AG04450 (cell line): ENCODE measurements at regions of chr16 and their contacts with region 1.

Region 1: DNA sequence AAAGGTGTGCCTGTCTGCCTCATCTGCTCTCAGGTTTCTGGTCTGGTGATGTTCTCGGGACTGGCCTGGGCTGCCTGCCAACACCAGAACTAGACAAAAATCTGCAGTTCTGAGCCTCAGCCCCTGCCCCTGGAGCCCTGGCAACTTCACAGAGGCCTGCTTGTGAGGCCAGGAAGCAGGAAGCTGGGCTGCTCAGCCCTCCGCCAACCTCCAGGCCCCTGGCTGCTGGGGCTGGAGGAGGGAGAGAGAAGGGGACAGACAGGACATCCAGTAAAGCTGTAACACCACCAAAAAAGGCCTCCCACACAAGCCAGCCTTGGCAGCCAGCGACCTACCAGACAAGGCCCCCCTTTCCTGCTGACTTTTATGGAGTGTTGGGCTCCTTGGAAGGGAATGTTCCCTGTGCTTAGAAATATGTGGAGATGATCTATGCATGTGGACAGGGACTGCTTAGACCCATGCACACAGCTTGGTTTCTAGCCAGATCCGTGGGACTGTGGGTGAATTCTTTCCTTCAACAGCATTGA is 157.6 kb downstream of the XYLT1 start:
- DNase-seq: no peak
- H3K4me3 ChIP-seq: no peak overlapping the region
- H3K27ac ChIP-seq: peak overlapping the region; percentile 39
- H3K27me3 ChIP-seq: no peaks in the 10 kb centered on the region
- CTCF ChIP-seq: no peak

Region 2: GRCh38 chr16:17296431-17296830 is 16.7 kb before region 1 on chr16:
- CTCF ChIA-PET with region 1: interaction called, 15 read pairs
- POLR2A ChIA-PET with region 1: no interaction called
- DNase-seq: no peak
- H3K4me3 ChIP-seq: no peak overlapping the region
- H3K27ac ChIP-seq: no peak overlapping the region
- H3K27me3 ChIP-seq: no peaks in the 10 kb centered on the region
- CTCF ChIP-seq: no peak